Activated CD4-positive, alpha-beta memory T cell treated with anti-CD3 and anti-CD28 coated beads, Interleukin-2, amount 10 ng/mL, durations not matched to agents 7 days and 5 days (primary cell): ENCODE measurements at regions of chr19 and their contacts with region 1.

Region 1: DNA sequence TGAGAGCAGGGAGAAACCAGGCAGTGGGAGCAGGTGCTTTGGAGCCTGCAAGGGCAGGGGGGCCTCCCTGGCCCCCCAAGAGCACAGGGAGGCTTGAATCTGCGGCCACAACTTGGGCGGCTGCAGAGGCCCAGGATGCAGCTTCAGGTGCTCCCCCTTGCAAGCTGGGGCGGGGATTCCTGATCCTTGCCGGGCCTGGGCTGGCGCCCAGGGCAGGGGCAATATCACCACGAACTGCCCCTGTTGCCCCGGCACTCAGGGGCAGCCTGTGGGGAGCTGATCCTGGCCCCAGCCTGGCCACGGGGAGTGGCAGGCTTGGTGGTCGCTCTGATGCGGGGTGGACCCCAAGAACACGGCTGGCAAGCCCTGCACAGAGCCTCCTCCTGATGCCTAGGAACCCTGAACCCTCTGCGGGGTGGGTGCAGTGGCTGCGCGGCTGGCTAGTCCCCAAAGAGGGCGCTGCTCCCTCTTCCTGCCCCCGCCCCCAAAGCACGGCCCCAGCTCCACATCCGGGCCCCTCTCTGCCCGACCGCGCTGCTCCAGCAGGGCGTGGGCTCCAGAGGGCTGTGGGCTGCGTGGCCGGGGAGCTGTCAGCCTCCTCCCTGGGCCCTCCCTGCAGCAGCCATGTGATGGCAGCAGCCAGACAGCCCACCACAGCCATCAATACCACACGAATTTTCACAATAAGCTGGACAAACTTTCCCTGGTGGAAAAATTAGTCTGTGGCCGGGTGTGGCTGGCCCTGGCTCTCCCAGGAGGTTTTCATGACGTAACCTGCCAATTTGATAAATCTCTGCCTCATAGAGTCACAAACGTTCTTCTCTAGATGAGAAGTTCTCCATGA is 21.0 kb downstream of the TNFSF9 start:
- DNase-seq: peak; percentile 79
- H3K4me3 Mint-ChIP-seq: no peak overlapping the region
- H3K27ac Mint-ChIP-seq: no peak overlapping the region
- H3K4me1 Mint-ChIP-seq: peaks cover 22% of the 10 kb centered on the region
- H3K27me3 Mint-ChIP-seq: peaks cover 4% of the 10 kb centered on the region

Region 2: GRCh38 chr19:6378041-6378440 is 173.8 kb before region 1 on chr19:
- CTCF ChIA-PET with region 1: no interaction called
- POLR2A ChIA-PET with region 1: no interaction called
- DNase-seq: no peak
- H3K4me3 Mint-ChIP-seq: no peak overlapping the region
- H3K27ac Mint-ChIP-seq: no peak overlapping the region
- H3K4me1 Mint-ChIP-seq: peaks cover 7% of the 10 kb centered on the region
- H3K27me3 Mint-ChIP-seq: no peaks in the 10 kb centered on the region

Region 3: GRCh38 chr19:6535558-6536137 is 16.2 kb before region 1 on chr19:
- CTCF ChIA-PET with region 1: interaction called, 11 read pairs
- POLR2A ChIA-PET with region 1: interaction called, 3 read pairs
- DNase-seq: no peak
- H3K4me3 Mint-ChIP-seq: no peak overlapping the region
- H3K27ac Mint-ChIP-seq: peak overlapping the region; percentile 63
- H3K4me1 Mint-ChIP-seq: peaks cover 56% of the 10 kb centered on the region
- H3K27me3 Mint-ChIP-seq: peaks cover 17% of the 10 kb centered on the region

Region 4: GRCh38 chr19:6568010-6568526 is 16.2 kb after region 1 on chr19:
- CTCF ChIA-PET with region 1: interaction called, 11 read pairs
- POLR2A ChIA-PET with region 1: no interaction called
- DNase-seq: no peak
- H3K4me3 Mint-ChIP-seq: no peak overlapping the region
- H3K27ac Mint-ChIP-seq: no peak overlapping the region
- H3K4me1 Mint-ChIP-seq: no peaks in the 10 kb centered on the region
- H3K27me3 Mint-ChIP-seq: peaks cover 39% of the 10 kb centered on the region

Region 5: GRCh38 chr19:6632002-6632621 is 80.3 kb after region 1 on chr19:
- CTCF ChIA-PET with region 1: no interaction called
- POLR2A ChIA-PET with region 1: no interaction called
- DNase-seq: peak; percentile 81
- H3K4me3 Mint-ChIP-seq: no peak overlapping the region
- H3K27ac Mint-ChIP-seq: no peak overlapping the region
- H3K4me1 Mint-ChIP-seq: peaks cover 31% of the 10 kb centered on the region
- H3K27me3 Mint-ChIP-seq: peaks cover 7% of the 10 kb centered on the region